ENCODE measurements at regions of chr4 and their contacts with region 1.

Region 1: GRCh38 chr4:87220094-87220822 is at the start of gene KLHL8:
- DNase-seq: peak; percentile 40
- ATAC-seq: peak; percentile 96
- H3K4me3 ChIP-seq: peak within 1 kb of the TSS; percentile 100
- H3K27ac ChIP-seq: peak within 1 kb of the TSS; percentile 93
- H3K4me1 ChIP-seq: no peaks in the 10 kb centered on the region; the same call in 1 of the 2 replicates
- H3K27me3 ChIP-seq: no peaks in the 10 kb centered on the region; a peak in 1 of 4 replicates
- CTCF ChIP-seq: peak in 2 of 3 experiments; percentile 11 to 17; a peak in 3 of 6 replicates
- EP300 ChIP-seq: no peak
- POLR2A ChIP-seq: peak; percentile 97
- RAD21 ChIP-seq: no peak
- polyA plus RNA-seq, gene KLHL8: 4.5 to 5.1 TPM

Region 2: DNA sequence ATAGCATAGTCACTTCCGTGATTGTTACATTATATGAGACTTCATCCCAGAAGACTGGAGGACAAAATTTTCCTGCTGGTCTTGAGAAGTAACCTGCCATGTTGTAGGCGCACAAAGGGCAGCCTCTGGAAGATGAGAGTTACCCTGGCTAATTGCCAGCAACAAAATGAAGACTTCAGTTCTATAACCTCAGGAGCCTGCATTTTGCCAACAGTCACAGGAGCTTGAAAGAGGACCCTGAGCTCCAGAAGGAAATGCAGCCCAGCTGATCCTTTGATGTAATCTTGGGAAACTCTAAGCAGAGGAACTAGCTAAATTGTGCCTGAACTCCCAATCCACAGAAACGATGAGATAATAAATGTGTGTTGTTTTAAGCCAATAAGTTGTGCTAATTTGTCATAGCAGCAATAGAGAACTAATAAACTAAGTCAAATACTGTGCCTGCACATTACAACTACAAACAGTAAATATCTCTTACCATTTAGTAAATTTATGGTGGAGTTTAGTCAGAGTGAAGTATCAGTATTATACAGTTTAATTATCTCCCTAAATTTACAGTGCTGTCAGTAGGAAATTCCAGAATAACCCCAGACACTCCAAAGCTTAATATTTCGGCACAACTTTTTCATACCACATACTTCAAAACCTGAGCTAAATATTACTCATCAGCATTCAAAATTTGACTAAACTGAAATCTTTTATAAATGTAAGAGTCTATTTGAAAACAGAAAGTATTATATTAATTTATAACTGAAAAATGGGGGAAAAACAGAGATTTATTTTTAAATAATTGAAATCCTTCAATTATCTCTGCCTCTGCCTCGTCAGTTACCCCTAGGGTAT is 770.3 kb before region 1 on chr4:
- CTCF ChIA-PET with region 1: no interaction called
- POLR2A ChIA-PET with region 1: no interaction called
- RAD21 ChIA-PET with region 1: no interaction called
- SMC1A ChIA-PET with region 1: no interaction called
- in situ Hi-C with region 1: no loop called
- intact Hi-C with region 1: no loop called
- DNase-seq: no peak
- ATAC-seq: no peak
- H3K4me3 ChIP-seq: no peak overlapping the region
- H3K27ac ChIP-seq: no peak overlapping the region
- H3K4me1 ChIP-seq: no peaks in the 10 kb centered on the region
- H3K27me3 ChIP-seq: no peaks in the 10 kb centered on the region
- CTCF ChIP-seq: no peak
- EP300 ChIP-seq: no peak
- POLR2A ChIP-seq: no peak
- RAD21 ChIP-seq: no peak

Region 3: DNA sequence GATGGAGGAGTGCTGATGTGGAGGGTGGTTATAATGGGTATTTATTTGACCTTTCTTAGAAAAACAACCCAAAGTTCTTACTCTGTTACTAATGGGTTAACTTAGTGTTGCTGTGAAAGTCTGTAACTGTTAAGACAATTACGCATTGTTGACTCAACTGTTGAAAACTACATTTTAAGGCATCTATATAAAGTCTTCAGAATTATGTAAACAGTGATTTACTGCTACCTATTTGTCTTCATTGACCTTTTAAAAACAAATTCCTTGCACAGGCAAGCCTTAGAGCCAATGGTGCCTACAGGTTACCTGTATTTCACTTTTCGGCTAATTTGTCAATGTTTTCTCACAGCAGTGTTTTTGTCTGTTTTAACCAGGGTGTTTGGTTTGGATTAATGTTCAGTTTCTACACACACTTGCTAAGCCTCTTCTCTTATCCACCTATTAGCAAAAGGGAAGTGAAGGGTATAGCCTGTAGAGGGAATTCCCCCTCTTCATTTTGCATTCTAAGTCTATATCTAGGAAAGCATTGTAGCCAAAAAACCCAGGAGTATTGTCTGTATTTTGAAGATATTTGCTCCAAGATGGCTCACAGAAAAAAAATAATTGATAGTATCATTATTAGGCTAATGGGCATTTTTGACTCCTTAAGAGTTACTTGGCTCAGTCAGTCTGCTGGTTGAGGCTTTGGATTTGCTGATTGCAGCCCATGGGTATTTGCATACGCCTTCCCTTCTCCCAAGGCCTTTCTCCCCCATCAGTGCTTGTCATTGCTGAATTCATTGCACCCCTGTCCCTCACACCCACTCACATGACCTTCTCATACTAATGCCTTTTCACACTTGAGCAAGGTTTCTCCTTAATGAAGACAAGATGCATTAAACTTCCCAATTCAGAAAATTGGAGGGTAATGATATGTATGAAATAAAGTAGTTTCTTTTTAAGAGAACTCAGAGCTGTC is 255.0 kb before region 1 on chr4:
- CTCF ChIA-PET with region 1: no interaction called
- POLR2A ChIA-PET with region 1: no interaction called
- RAD21 ChIA-PET with region 1: no interaction called
- SMC1A ChIA-PET with region 1: no interaction called
- in situ Hi-C with region 1: no loop called
- intact Hi-C with region 1: no loop called
- DNase-seq: no peak
- ATAC-seq: peak; percentile 62
- H3K4me3 ChIP-seq: peak overlapping the region; percentile 3; the same call in 1 of the 2 replicates
- H3K27ac ChIP-seq: peak overlapping the region; percentile 71
- H3K4me1 ChIP-seq: peaks cover 52% of the 10 kb centered on the region
- H3K27me3 ChIP-seq: no peaks in the 10 kb centered on the region
- CTCF ChIP-seq: no peak
- EP300 ChIP-seq: 0 out of 4 replicates have a peak, but pooled peaks of 1 of the 2 experiments have one; percentile 13
- POLR2A ChIP-seq: no peak
- RAD21 ChIP-seq: no peak

Region 4: DNA sequence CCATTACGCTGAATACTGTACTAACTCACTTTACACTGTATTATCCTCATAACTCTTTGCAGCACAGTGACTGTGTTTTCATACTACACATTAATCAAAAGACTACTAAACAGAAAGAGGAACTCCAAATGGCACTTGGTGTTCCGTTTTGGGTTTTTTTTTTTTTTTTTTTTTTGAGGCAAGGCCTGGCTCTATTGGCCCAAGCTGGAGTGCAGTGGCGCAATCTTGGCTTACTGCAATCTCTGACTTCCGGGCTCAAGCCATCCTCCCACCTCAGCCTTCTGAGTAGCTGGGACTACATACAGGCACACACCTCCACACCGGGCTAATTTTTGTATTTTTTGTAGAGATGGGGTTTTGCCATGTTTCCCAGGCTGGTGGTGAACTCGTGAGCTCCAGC is 10.6 kb before region 1 on chr4:
- CTCF ChIA-PET with region 1: interaction called, 9 read pairs
- POLR2A ChIA-PET with region 1: interaction called, 10 read pairs
- RAD21 ChIA-PET with region 1: interaction called, 6 read pairs
- SMC1A ChIA-PET with region 1: interaction called, 7 read pairs
- in situ Hi-C with region 1: no loop called
- intact Hi-C with region 1: no loop called
- DNase-seq: peak; percentile 26
- ATAC-seq: peak; percentile 96
- H3K4me3 ChIP-seq: no peak overlapping the region
- H3K27ac ChIP-seq: peak overlapping the region; percentile 54
- H3K4me1 ChIP-seq: no peaks in the 10 kb centered on the region; the same call in 1 of the 2 replicates
- H3K27me3 ChIP-seq: no peaks in the 10 kb centered on the region
- CTCF ChIP-seq: no peak
- EP300 ChIP-seq: no peak
- POLR2A ChIP-seq: no peak
- RAD21 ChIP-seq: no peak

Region 5: GRCh38 chr4:87235020-87235671 is 14.9 kb after region 1 on chr4:
- CTCF ChIA-PET with region 1: interaction called, 9 read pairs
- POLR2A ChIA-PET with region 1: no interaction called
- RAD21 ChIA-PET with region 1: interaction called, 4 read pairs
- SMC1A ChIA-PET with region 1: interaction called, 13 read pairs
- in situ Hi-C with region 1: no loop called
- intact Hi-C with region 1: no loop called
- DNase-seq: no peak
- ATAC-seq: peak; percentile 32; the same call in 2 of the 3 replicates
- H3K4me3 ChIP-seq: peak overlapping the region; percentile 66; the same call in 1 of the 2 replicates
- H3K27ac ChIP-seq: no peak overlapping the region
- H3K4me1 ChIP-seq: no peaks in the 10 kb centered on the region; the same call in 1 of the 2 replicates
- H3K27me3 ChIP-seq: no peaks in the 10 kb centered on the region
- CTCF ChIP-seq: no peak
- EP300 ChIP-seq: no peak
- POLR2A ChIP-seq: no peak
- RAD21 ChIP-seq: no peak

Region 6: GRCh38 chr4:87339440-87339839 is 119.2 kb after region 1 on chr4:
- CTCF ChIA-PET with region 1: no interaction called
- POLR2A ChIA-PET with region 1: interaction called, 10 read pairs
- RAD21 ChIA-PET with region 1: no interaction called
- SMC1A ChIA-PET with region 1: no interaction called
- in situ Hi-C with region 1: no loop called
- intact Hi-C with region 1: no loop called
- DNase-seq: no peak
- ATAC-seq: no peak
- H3K4me3 ChIP-seq: no peak overlapping the region
- H3K27ac ChIP-seq: no peak overlapping the region
- H3K4me1 ChIP-seq: no peaks in the 10 kb centered on the region
- H3K27me3 ChIP-seq: no peaks in the 10 kb centered on the region
- CTCF ChIP-seq: no peak
- EP300 ChIP-seq: no peak
- POLR2A ChIP-seq: no peak
- RAD21 ChIP-seq: no peak

Region 7: DNA sequence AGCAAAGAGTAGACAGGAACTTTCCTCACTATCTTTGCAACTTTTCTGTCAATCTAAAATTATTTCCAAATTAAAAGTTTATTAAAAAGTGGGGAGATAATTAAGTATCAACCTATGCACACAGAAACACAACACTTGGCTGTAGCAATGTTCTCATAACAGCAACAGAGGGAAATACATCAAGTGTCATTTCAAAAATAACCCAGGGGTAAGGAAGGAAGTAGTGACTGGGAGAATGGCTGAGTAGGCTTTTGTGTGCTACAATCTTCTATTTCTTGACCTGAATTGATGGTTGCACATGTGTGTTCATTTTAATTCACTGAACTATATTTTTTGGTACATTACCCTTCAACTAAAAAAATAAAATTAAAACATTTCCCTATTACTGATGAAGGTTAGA is 870.6 kb after region 1 on chr4:
- CTCF ChIA-PET with region 1: no interaction called
- POLR2A ChIA-PET with region 1: no interaction called
- RAD21 ChIA-PET with region 1: no interaction called
- SMC1A ChIA-PET with region 1: no interaction called
- in situ Hi-C with region 1: no loop called
- intact Hi-C with region 1: no loop called
- DNase-seq: no peak
- ATAC-seq: no peak
- H3K4me3 ChIP-seq: no peak overlapping the region
- H3K27ac ChIP-seq: no peak overlapping the region
- H3K4me1 ChIP-seq: no peaks in the 10 kb centered on the region
- H3K27me3 ChIP-seq: no peaks in the 10 kb centered on the region
- CTCF ChIP-seq: no peak
- EP300 ChIP-seq: no peak
- POLR2A ChIP-seq: no peak
- RAD21 ChIP-seq: no peak

Measured in GM12878 (cell line).